HEK293T (cell line): ENCODE measurements at regions of chr14 and their contacts with region 1.

Region 1: DNA sequence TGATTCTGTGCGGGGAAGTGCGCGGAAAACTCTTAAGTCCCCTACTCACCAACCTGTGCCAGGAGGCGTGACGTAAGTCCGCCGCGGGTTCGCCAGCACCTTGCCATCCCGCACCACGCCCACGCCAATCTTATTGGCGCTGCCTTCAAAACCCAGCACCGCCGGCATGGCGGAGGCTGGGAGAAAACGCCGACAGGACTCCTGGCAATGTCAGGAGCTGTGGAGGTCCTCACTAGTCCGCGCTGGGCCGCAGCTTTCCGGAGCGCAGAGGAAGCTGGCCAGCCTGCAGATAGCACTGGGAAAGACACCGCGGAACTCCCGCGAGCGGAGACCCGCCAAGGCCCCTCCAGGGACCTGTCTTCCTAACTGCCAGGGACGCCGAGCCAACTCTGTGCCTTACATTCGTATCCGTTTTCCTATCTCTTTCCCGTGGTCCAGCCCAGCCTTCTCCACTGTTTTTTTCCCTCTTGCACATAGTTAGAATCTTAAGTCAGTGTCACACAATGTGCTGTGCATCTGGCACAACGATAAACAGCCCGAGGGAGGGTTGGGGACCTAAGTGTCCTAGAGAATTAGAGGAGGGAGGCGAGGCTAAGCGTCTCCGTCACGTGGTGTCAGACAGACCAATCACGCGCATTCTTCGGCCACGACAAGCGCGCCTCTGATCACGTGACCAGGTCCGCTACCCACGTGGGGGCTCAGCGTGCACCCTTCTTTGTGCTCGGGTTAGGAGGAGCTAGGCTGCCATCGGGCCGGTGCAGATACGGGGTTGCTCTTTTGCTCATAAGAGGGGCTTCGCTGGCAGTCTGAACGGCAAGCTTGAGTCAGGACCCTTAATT is at the starts of genes APEX1 and OSGEP:
- DNase-seq: peak; percentile 94

Region 2: GRCh38 chr14:20343092-20343861 is 111.5 kb before region 1 on chr14 and contains the start of gene PARP2:
- CTCF ChIA-PET with region 1: no interaction called
- POLR2A ChIA-PET with region 1: interaction called, 37 read pairs
- DNase-seq: peak; percentile 97

Region 3: DNA sequence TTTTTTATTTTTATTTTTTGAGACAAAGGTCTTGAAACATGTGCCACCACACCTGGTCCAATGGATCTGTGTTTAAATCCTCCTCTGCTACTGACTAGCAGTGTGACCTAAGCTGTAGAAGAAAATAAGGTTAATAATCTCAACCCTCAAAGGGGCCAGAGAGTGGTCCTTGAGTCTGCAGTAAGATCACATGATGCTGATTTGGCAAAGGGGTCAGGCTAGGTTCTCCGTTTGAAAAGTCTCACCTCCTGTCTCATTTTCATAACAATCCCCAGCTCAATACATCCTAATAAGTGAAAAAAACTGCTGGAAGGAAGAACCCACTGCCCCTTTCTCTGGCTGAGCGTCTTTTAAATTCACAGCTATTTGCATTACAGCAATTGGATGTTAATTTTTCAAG is 33.5 kb before region 1 on chr14:
- CTCF ChIA-PET with region 1: interaction called, 6 read pairs
- POLR2A ChIA-PET with region 1: interaction called, 58 read pairs
- DNase-seq: no peak

Region 4: DNA sequence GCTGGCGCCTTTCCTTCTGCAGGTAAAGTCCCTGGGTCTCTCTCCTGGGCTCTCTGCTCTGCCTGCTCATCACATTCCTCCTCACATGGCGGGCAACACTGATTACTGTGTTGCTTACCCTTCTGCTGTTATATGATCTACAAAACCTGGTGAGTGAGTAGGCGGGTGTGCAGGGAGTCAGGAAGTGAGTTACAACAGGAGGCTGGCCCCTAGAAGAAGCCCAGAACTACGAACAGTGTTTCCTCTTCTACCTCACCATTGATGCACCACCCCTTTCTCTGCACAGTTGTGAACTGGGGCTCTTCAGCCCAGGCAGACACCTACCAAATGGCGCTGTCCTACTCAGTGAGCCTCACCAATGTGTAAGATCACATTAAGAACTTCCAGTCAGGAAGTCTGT is 13.9 kb before region 1 on chr14:
- CTCF ChIA-PET with region 1: no interaction called
- POLR2A ChIA-PET with region 1: interaction called, 13 read pairs
- DNase-seq: no peak